ENCODE measurements at regions of chr1 and their contacts with region 1.

Region 1: DNA sequence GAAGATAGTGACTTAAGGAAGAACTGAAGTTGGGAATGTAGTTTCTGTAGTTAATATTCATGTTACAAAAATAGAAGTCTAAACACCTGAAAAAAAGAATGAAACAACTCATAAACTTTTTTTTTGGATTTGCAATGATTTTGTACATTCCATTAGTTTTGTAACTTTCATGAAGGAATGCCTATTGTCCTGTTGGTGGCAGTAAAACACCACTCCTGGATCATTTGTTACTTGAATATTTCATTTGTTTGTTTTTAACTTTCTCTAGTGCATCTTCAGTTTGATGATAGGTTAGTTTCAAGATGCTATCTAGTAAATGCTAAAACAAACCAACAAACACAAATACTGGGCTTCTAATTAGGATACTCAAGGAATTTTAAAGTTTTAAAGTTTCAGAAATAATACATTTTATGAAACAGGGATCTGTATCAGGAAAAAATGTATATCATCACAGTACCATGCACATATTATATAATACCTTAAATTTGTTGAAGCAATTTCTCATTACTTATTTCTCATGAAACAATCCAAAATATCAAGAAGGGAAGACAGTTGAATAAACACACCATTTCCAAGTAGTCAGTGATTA is 229.7 kb upstream of the CACYBP start:
- DNase-seq: peak; percentile 68

Region 2: DNA sequence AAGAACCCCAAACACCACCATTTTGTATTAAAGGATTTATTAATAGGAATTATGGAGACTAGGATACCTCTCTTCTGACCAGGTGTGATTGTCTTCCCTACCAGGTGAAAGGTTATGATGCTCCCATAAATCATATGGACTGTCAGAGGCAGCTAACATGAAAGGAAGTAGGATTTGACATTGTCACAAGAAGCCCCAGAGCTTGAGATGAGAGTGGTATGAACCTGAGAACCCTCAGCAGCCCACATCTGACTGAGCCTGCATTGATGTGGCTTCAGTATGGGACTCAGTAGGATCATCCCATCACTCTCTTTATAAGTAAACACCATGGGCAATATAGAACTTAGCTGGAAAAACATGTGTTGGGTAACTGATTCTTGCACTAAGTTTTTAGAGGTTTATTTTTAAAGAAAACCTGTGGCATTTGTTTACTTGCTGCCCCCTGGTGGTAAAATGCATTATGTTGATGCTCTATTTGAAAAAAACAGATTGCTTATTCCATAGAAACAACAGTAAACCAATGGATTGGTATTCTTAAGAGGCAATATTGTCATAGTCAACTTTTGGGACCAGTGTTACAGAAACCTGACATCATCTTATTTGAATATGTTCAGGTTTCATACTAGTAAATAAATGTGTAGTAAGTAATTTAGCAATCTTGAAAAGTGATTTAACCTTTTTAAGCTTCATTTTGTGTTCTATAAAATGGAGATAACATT is 213.1 kb after region 1 on chr1:
- in situ Hi-C with region 1: loop called (anchors 10 kb)
- DNase-seq: peak; percentile 66